ENCODE measurements at regions of chr6 and their contacts with region 1.

Region 1: DNA sequence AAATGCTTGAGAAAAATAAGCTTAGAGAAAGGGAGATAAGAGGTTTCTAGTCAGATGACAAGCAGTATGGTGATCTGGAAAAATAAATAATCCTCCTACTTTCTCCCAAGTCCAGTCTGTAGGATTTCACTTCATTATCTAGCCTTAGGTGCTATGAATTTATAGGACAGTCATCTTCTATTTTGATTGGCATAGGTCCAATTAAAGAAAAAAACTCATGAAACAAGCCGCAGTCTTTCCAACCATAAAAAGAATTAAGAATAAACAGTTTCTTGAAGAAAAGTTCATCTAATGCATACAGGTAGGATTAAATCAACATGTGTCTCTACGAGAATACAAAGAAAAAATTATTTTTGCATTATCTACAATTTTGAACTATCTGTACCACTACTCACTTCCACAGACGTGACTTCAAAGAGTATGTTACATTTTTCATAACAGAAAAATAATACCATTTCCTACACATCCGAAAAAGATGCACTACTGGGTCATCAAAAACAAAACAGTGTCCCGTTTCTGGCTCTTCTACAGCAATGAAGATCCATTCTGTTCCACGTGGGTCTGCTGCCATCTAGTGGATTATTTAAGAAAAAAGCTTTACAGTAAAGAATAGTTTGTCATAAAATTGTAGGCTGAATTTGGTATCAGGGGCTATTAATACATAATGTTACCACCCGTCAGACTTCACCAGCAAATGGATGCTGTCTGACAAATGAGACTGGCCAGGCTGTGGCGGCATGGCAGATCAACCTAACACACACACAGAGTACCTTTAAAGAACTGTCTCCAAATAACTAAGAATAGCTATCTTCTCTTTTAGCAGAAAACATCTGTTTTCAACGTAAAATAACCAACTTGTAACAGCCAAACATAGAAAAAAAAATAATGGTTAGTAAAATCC is 28.9 kb downstream of the STX7 start:
- DNase-seq: peak; percentile 74 to 87 (median 79)
- H3K4me3 ChIP-seq: no peak overlapping the region
- H3K27ac ChIP-seq: no peak overlapping the region
- H3K4me1 ChIP-seq: peaks cover 4 to 14% (median 7%) of the 10 kb centered on the region in 4 experiments
- H3K27me3 ChIP-seq: no peaks in the 10 kb centered on the region

Region 2: GRCh38 chr6:132279592-132280139 is 204.4 kb before region 1 on chr6:
- CTCF ChIA-PET with region 1: interaction called, 115 read pairs
- POLR2A ChIA-PET with region 1: no interaction called
- DNase-seq: peak; percentile 77 to 87 (median 85)
- H3K4me3 ChIP-seq: peak overlapping the region in 6 of 7 experiments; percentile 61 to 95 (median 70)
- H3K27ac ChIP-seq: no peak overlapping the region
- H3K4me1 ChIP-seq: peaks cover 0 to 3% (median under 1%) of the 10 kb centered on the region in 4 experiments
- H3K27me3 ChIP-seq: peaks cover 0 to 9% (median 0%) of the 10 kb centered on the region in 5 experiments

Region 3: GRCh38 chr6:132286026-132287019 is 197.7 kb before region 1 on chr6:
- CTCF ChIA-PET with region 1: interaction called, 115 read pairs
- POLR2A ChIA-PET with region 1: no interaction called
- DNase-seq: peak; percentile 72 to 96 (median 95)
- H3K4me3 ChIP-seq: no peak overlapping the region
- H3K27ac ChIP-seq: no peak overlapping the region
- H3K4me1 ChIP-seq: peaks cover 0 to 6% (median 4%) of the 10 kb centered on the region in 4 experiments
- H3K27me3 ChIP-seq: peaks cover 0 to 1% (median 0%) of the 10 kb centered on the region in 5 experiments

Region 4: GRCh38 chr6:132445201-132445951 is 38.7 kb before region 1 on chr6:
- CTCF ChIA-PET with region 1: no interaction called
- POLR2A ChIA-PET with region 1: no interaction called
- DNase-seq: no peak
- H3K4me3 ChIP-seq: no peak overlapping the region
- H3K27ac ChIP-seq: no peak overlapping the region
- H3K4me1 ChIP-seq: no peaks in the 10 kb centered on the region
- H3K27me3 ChIP-seq: no peaks in the 10 kb centered on the region

Region 5: GRCh38 chr6:132587424-132587823 is 103.4 kb after region 1 on chr6:
- CTCF ChIA-PET with region 1: no interaction called
- POLR2A ChIA-PET with region 1: no interaction called
- DNase-seq: peak in 1 of 3 donors; percentile 5
- H3K4me3 ChIP-seq: no peak overlapping the region
- H3K27ac ChIP-seq: no peak overlapping the region
- H3K4me1 ChIP-seq: peaks cover 0 to 1% (median 0%) of the 10 kb centered on the region in 4 experiments
- H3K27me3 ChIP-seq: peaks cover 0 to 3% (median 0%) of the 10 kb centered on the region in 5 experiments